Activated T-helper 1 cell treated with anti-CD3 and anti-CD28 coated beads, Interleukin-12 subunit alpha, Interleukin-12 subunit beta, Interleukin-2, Interleukin-4 antibody, amounts not matched to agents 30 ng/mL and 10 ng/mL and 1 ng/mL, durations not matched to agents 14 hours and 24 hours and 36 hours (primary cell): ENCODE measurements at regions of chr1 and their contacts with region 1.

Region 1: DNA sequence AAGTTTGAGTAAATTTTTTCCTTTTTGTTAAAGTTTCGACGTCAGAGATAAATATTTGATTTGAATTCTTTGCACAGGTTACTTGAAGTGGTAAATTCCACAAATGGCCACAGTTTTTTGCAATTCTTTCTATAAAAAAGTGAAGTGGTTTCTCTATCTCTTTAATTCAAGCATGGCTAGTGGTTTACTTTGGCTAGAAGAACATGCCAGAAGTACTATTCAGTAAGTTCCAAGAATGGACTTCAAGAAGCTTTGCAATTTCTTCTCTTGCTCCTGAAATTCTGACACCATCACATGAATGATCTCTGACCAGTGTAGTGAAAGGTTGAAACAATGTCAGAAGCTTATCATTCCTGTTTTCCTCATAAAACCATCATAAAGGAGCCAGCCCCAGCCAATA is 55.7 kb upstream of the RNPC3 start:
- DNase-seq: no peak
- H3K4me3 Mint-ChIP-seq: no peak overlapping the region
- H3K27ac Mint-ChIP-seq: no peak overlapping the region
- H3K4me1 Mint-ChIP-seq: no peaks in the 10 kb centered on the region
- H3K27me3 Mint-ChIP-seq: no peaks in the 10 kb centered on the region

Region 2: GRCh38 chr1:102500758-102501157 is 969.0 kb before region 1 on chr1:
- intact Hi-C with region 1: no loop called
- DNase-seq: no peak
- H3K4me3 Mint-ChIP-seq: no peak overlapping the region
- H3K27ac Mint-ChIP-seq: no peak overlapping the region
- H3K4me1 Mint-ChIP-seq: no peaks in the 10 kb centered on the region
- H3K27me3 Mint-ChIP-seq: no peaks in the 10 kb centered on the region

Region 3: GRCh38 chr1:103441342-103441741 is 28.5 kb before region 1 on chr1:
- intact Hi-C with region 1: loop called (anchors 1 kb)
- DNase-seq: no peak
- H3K4me3 Mint-ChIP-seq: no peak overlapping the region
- H3K27ac Mint-ChIP-seq: no peak overlapping the region
- H3K4me1 Mint-ChIP-seq: no peaks in the 10 kb centered on the region
- H3K27me3 Mint-ChIP-seq: peaks cover 5% of the 10 kb centered on the region

Region 4: GRCh38 chr1:103496014-103496635 is 26.3 kb after region 1 on chr1:
- intact Hi-C with region 1: no loop called
- DNase-seq: no peak
- H3K4me3 Mint-ChIP-seq: no peak overlapping the region
- H3K27ac Mint-ChIP-seq: no peak overlapping the region
- H3K4me1 Mint-ChIP-seq: no peaks in the 10 kb centered on the region
- H3K27me3 Mint-ChIP-seq: peaks cover 3% of the 10 kb centered on the region